MCF 10A (cell line): ENCODE measurements at regions of chr9 and their contacts with region 1.

Region 1: GRCh38 chr9:129131300-129132145 is 20.3 kb downstream of the PTPA start:
- DNase-seq: peak; percentile 70
- H3K4me3 Mint-ChIP-seq: no peak overlapping the region
- H3K27ac Mint-ChIP-seq: no peak overlapping the region
- H3K4me1 Mint-ChIP-seq: no peaks in the 10 kb centered on the region
- H3K27me3 Mint-ChIP-seq: no peaks in the 10 kb centered on the region
- CTCF ChIP-seq: peak; percentile 92

Region 2: GRCh38 chr9:129110740-129111527 is 20.6 kb before region 1 on chr9 and contains the starts of genes CRAT and PTPA:
- CTCF ChIA-PET with region 1: interaction called, 13 read pairs
- POLR2A ChIA-PET with region 1: interaction called, 20 read pairs
- intact Hi-C with region 1: no loop called
- DNase-seq: peak; percentile 92
- H3K4me3 Mint-ChIP-seq: peak within 1 kb of the TSS; percentile 89
- H3K27ac Mint-ChIP-seq: peak within 1 kb of the TSS; percentile 94
- H3K4me1 Mint-ChIP-seq: peaks cover 18% of the 10 kb centered on the region
- H3K27me3 Mint-ChIP-seq: no peaks in the 10 kb centered on the region
- CTCF ChIP-seq: no peak
- total RNA-seq, gene CRAT: 14.5 and 17.0 TPM in 2 replicates
- total RNA-seq, gene PTPA: 90.8 and 91.8 TPM in 2 replicates

Region 3: DNA sequence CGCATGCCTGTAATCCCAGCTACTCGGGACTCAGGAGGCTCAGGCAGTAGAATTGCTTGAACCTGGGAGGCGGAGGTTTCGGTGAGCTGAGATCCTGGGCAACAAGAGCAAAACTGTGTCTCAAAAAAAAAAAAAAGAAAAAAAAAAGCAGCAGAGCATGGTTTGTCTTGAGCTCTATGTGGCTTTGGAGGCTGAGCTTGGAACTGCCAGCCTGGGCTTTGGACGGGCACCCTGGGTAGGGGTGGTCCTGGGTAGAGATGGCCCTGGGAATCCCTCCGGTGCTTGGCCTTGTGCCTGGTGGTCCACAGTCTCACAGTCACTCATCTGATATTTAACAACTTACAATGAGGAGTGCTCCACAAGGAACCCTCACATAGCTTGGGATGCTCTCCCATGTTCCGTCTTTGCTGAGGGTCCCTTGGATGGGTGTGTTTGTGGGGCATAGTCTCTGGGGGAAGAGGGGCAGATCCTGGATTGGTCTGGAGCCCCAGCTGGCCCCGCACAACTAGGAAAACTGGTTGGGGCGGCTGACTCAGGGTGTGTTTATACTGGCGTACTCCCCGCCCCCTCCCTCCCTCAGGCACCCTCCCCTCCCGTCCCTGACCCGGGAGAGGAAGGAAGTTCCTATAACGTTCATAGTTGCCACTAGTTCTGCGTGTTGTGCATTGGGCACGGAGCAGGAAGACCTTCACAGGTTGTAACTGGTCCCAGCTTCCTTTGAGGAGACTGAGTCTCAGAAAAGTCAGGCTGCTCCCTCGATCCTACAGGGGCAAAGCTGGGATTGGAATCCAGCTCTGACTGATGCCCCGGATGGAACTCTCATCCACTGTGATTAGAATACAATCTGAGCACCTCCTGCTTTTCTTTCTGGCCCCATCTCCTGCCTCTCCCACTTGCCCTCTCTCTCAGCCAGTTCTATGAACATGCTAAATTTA is 35.4 kb after region 1 on chr9:
- CTCF ChIA-PET with region 1: interaction called, 11 read pairs
- POLR2A ChIA-PET with region 1: interaction called, 4 read pairs
- intact Hi-C with region 1: no loop called
- DNase-seq: peak; percentile 81
- H3K4me3 Mint-ChIP-seq: peak overlapping the region; percentile 63
- H3K27ac Mint-ChIP-seq: peak overlapping the region; percentile 87
- H3K4me1 Mint-ChIP-seq: peaks cover 25% of the 10 kb centered on the region
- H3K27me3 Mint-ChIP-seq: no peaks in the 10 kb centered on the region
- CTCF ChIP-seq: no peak

Region 4: DNA sequence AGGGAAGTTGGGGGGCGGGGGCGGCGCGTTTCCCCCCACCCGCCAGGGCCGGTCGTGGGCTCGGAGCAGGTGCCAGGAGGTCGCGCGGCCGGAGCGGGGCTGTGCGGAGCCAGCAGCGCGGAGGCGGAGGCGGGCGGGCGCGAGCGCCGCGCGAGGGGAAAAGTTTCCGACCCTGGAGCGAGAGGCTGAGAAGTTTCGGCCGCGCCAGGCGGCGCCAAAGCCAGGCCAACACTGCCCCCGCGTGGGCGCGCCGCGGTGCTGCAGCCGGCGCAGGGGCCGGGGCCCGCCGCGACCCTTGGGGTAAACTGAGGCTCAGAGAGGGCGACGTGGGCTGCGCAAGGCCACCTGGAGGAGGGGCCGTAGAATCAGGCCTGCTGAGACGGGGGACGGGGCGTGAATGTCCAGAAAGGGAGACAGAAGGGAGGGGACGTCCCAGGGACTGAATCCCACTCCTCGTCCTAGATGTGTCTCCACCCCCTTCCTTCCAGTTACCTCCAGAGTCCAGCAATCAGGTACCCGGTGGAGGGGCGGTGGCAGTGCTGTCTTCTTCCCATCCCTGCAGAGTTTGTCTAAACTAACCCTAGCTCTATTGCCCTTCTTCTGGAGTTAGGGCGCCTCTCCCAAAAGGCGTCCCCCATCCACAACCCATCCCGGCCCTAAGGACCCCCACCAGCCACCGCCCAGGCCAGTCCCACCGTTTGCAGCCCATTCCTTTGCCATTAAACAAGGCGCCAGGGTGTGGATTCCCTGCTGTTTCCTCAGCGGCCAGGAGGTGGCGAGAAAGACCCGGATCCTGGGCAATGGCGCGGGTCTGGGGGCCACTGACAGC is 479.2 kb after region 1 on chr9:
- CTCF ChIA-PET with region 1: interaction called, 28 read pairs
- POLR2A ChIA-PET with region 1: no interaction called
- intact Hi-C with region 1: loop called (anchors 2 kb)
- DNase-seq: peak; percentile 66
- H3K4me3 Mint-ChIP-seq: peak overlapping the region; percentile 75
- H3K27ac Mint-ChIP-seq: no peak overlapping the region
- H3K4me1 Mint-ChIP-seq: peaks cover 13% of the 10 kb centered on the region
- H3K27me3 Mint-ChIP-seq: no peaks in the 10 kb centered on the region
- CTCF ChIP-seq: peak; percentile 88